ENCODE measurements at regions of chr1 and their contacts with region 1.

Region 1: DNA sequence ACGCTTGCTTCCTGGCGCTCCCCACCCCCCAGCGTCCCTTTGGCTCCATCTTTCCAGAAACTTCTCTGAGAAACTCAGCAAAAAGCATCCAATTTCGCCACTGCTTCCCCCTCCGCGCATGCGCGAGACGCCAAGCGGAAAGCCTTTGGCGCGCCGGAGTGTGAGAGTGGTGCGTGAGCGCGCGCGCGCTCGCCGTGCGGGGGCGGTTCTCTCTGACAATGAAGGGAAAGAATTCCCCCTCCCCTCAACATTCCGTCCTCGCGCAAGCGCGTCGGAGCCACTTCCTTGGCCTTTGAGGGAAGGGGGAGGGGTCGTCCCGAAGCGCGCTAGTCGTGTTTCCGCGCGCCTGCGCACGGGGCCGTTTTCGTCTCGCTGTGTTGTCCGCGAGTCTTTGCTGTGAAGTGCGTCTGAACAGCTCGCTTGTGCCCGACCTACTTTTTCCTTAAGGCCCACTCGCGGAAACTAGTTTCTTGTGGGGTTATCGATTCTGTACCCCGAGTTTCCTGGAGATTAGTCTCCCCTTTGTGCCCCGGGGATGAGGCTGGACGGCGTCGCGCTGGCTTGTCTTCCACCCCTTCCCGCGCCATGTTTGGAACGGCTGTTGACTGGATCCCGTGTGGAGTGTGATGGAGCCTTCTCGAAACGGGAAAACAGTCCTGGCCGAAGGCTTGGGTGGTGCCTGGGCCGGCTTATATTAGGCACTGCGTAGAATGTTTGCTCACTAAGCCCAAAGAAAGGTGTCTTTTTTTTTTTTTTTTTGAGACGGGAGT is 11.6 kb upstream of the SPEN start:
- DNase-seq: peak; percentile 90
- CTCF ChIP-seq: no peak

Region 2: DNA sequence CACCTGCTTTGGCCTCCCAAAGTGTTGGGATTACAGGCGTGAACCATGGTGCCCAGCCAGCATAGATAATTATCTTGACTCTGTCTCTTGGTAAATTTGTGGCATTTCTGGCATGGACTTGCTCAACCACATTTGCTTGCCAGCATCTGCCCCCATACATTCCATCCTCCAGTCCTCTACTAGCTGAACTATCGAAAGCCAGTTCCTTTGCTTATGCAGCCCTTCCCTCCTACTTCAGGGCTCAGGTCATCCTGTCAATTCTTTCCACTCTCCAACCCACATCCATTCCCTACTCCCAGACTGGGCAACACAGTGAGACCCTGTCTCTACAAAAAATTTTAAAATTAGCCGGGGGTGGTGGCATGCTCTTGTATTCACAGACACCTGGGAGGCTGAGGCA is 15.4 kb before region 1 on chr1:
- CTCF ChIA-PET with region 1: interaction called, 13 read pairs
- POLR2A ChIA-PET with region 1: interaction called, 14 read pairs
- DNase-seq: no peak
- CTCF ChIP-seq: no peak

Region 3: GRCh38 chr1:15825800-15826199 is 10.1 kb before region 1 on chr1:
- CTCF ChIA-PET with region 1: no interaction called
- POLR2A ChIA-PET with region 1: interaction called, 14 read pairs
- DNase-seq: no peak
- CTCF ChIP-seq: no peak

Region 4: GRCh38 chr1:15847100-15847892 is 11.4 kb after region 1 on chr1 and contains the start of gene SPEN:
- CTCF ChIA-PET with region 1: interaction called, 16 read pairs
- POLR2A ChIA-PET with region 1: interaction called, 24 read pairs
- DNase-seq: peak; percentile 91
- CTCF ChIP-seq: no peak